GM12878 (cell line): ENCODE measurements at regions of chr3 and their contacts with region 1.

Region 1: DNA sequence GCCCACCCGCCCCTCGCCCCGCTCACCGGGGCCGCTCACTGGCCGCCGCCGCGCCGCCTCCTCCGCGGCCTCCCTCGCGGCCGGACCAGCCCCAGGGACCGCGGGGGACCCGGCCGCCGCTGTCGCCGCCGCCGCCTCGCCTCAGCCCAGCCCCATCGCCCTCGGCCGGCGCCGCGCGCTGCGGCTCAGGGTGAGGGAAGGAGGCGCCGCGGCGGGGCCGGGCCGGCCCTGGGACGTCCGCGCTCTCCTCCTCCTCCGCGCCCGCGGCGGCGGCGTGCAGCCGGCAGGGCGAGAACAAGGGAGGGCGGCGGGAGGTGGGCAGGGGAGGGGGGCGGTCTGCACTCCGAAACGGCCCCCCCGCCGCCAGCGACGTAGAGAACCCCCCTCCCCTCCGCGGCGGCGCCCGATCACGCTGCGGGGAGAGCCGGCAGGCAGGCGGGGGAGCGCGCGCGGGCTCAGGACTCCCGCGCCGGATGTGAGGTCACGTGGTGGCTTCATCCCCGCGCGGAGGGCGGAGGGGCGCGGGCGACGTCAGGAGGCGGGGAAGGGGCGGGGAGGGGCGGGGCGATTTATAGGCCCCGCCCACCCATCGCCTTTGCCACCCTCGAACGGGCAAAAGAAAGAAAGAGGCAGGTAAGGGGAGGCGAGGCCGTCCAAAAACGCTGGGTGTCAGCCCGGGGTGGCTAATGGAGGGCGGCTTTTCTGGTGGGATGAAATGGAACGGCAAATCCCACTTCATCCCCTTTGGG is at the start of gene ATP13A3:
- DNase-seq: no peak
- ATAC-seq: peak; percentile 70
- H3K4me3 ChIP-seq: peak within 1 kb of the TSS; percentile 84
- H3K27ac ChIP-seq: peak within 1 kb of the TSS; percentile 92
- H3K4me1 ChIP-seq: peaks cover 20% of the 10 kb centered on the region
- H3K27me3 ChIP-seq: no peaks in the 10 kb centered on the region
- CTCF ChIP-seq: no peak
- EP300 ChIP-seq: no peak
- POLR2A ChIP-seq: peak; percentile 88
- RAD21 ChIP-seq: no peak
- polyA plus RNA-seq, gene ATP13A3: 14.0 to 17.7 TPM

Region 2: DNA sequence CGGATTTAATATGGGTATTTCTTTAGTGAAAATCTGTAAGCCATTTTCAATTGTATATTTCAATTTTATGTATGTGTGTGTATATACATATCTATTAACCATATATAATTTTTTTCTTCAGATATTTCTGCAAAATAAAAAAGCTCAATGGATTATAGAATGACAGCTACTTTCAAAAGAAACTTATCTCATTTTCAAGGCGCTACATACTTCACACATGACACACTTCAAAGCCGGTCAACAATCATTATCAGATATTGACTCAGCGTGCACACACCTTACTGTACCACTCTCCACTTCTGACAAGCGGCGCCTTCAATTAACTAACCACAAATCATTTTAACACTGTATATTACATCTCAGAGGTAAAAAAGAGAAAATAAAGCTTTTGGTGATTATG is 39.6 kb before region 1 on chr3:
- CTCF ChIA-PET with region 1: no interaction called
- POLR2A ChIA-PET with region 1: no interaction called
- RAD21 ChIA-PET with region 1: no interaction called
- SMC1A ChIA-PET with region 1: no interaction called
- in situ Hi-C with region 1: no loop called
- intact Hi-C with region 1: no loop called
- DNase-seq: no peak
- ATAC-seq: no peak
- H3K4me3 ChIP-seq: no peak overlapping the region
- H3K27ac ChIP-seq: no peak overlapping the region
- H3K4me1 ChIP-seq: peaks cover 6% of the 10 kb centered on the region
- H3K27me3 ChIP-seq: no peaks in the 10 kb centered on the region
- CTCF ChIP-seq: no peak
- EP300 ChIP-seq: no peak
- POLR2A ChIP-seq: no peak
- RAD21 ChIP-seq: no peak

Region 3: GRCh38 chr3:194497821-194498598 is 11.3 kb after region 1 on chr3:
- CTCF ChIA-PET with region 1: interaction called, 4 read pairs
- POLR2A ChIA-PET with region 1: interaction called, 8 read pairs
- RAD21 ChIA-PET with region 1: interaction called, 18 read pairs
- SMC1A ChIA-PET with region 1: interaction called, 14 read pairs
- in situ Hi-C with region 1: no loop called
- intact Hi-C with region 1: no loop called
- DNase-seq: no peak
- ATAC-seq: peak; percentile 75
- H3K4me3 ChIP-seq: no peak overlapping the region
- H3K27ac ChIP-seq: no peak overlapping the region
- H3K4me1 ChIP-seq: peaks cover 13% of the 10 kb centered on the region
- H3K27me3 ChIP-seq: no peaks in the 10 kb centered on the region
- CTCF ChIP-seq: no peak
- EP300 ChIP-seq: no peak
- POLR2A ChIP-seq: no peak
- RAD21 ChIP-seq: no peak

Region 4: GRCh38 chr3:194583604-194584318 is 97.0 kb after region 1 on chr3:
- CTCF ChIA-PET with region 1: no interaction called
- POLR2A ChIA-PET with region 1: interaction called, 5 read pairs
- RAD21 ChIA-PET with region 1: no interaction called
- SMC1A ChIA-PET with region 1: interaction called, 10 read pairs
- in situ Hi-C with region 1: loop called (anchors 5 kb)
- intact Hi-C with region 1: no loop called
- DNase-seq: peak; percentile 53
- ATAC-seq: peak; percentile 98
- H3K4me3 ChIP-seq: peak overlapping the region; percentile 77
- H3K27ac ChIP-seq: peak overlapping the region; percentile 96
- H3K4me1 ChIP-seq: no peaks in the 10 kb centered on the region
- H3K27me3 ChIP-seq: no peaks in the 10 kb centered on the region
- CTCF ChIP-seq: no peak
- EP300 ChIP-seq: 0 out of 4 replicates have a peak, but pooled peaks of 1 of the 2 experiments have one; percentile 32
- POLR2A ChIP-seq: peak; percentile 100
- RAD21 ChIP-seq: no peak